Mammary epithelial cell (primary cell): ENCODE measurements at regions of chr3 and their contacts with region 1.

Region 1: DNA sequence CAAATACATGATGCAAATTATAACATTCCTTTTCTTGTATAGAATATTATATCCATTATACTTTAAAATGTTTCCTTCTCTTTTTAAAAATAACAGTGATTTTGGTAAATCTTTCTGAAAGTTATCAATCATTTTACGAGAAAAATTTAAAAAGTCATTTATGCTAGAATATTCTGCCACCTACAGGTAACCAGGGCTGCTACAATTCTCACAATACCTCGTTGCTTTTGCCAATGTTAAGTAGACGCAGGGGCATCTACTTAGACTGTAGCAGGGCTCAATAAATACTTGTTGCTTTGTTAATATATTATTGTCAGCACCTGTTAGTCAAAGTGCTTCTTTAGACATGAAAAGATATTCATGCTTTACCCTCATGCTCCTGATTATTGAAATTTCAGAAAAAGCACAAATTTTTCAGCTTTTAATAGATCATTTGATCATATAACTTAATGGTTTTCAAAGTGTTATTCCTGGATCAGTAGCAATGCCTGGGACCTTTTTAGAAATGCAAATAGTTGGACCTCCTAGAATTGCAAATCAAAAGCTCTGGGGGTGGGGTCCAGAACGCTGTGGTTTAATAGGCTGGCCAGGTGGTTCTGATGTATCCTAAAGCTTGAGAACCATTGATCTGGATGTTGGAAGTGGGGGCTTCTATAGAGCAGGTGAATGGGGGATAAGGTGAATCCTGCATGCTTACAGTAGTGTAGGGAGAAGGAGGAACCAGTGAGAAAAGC is 223.6 kb upstream of the PDZRN3 start:
- DNase-seq: peak; percentile 13
- H3K4me3 ChIP-seq: no peak overlapping the region
- H3K27ac ChIP-seq: no peak overlapping the region
- H3K4me1 ChIP-seq: no peaks in the 10 kb centered on the region
- H3K27me3 ChIP-seq: no peaks in the 10 kb centered on the region
- CTCF ChIP-seq: peak; percentile 77 to 82

Region 2: GRCh38 chr3:73459711-73460110 is 388.6 kb before region 1 on chr3:
- CTCF ChIA-PET with region 1: no interaction called
- dilution Hi-C with region 1: no loop called
- in situ Hi-C with region 1: no loop called
- intact Hi-C with region 1: loop called (anchors 5 kb)
- DNase-seq: no peak
- H3K4me3 ChIP-seq: no peak overlapping the region
- H3K27ac ChIP-seq: no peak overlapping the region
- H3K4me1 ChIP-seq: no peaks in the 10 kb centered on the region
- H3K27me3 ChIP-seq: no peaks in the 10 kb centered on the region
- CTCF ChIP-seq: no peak

Region 3: DNA sequence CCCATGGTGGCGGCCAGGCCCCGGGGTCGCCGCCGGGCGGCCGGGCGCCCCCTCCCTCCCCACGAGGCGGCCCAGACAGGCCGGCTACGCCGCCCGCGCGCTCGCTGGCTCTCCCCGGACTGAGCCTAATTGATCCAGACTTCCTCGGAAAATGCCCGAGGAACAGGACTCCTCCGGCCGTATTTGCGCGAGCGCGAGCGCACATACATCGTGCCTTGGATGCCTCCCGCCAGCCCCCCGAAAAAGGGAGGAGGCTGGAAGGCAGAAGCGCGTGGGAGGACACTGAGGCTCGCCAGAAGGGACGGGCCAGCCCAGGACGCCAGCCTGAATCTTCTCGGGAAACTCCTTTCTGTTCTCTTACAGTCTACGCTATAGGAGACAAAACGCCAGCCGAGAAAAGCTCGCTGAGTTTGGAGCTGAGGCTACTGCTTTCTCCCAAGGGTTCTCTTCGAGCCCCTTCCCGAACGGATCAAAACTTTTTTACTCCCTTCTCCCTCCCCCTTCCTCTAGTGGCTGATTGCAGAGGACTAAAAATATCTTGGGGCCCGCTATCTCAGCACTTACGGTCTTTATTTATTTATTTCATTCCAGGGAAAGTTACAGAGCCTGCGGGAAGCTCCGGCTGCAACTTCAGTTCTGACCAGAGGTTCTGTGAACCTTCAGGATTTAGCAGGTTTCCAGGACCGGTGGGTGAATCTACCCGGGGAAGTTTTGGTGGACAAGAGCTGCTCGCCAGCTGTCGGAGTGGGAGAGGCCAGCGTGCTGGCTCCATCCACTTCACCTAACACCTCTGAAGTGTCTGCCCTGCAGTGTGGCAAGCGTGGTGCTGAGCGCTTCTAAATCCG is 223.3 kb before region 1 on chr3 and contains the start of gene PDZRN3:
- CTCF ChIA-PET with region 1: no interaction called
- dilution Hi-C with region 1: no loop called
- in situ Hi-C with region 1: no loop called
- intact Hi-C with region 1: loop called (anchors 2 kb)
- DNase-seq: peak; percentile 51
- H3K4me3 ChIP-seq: peak within 1 kb of the TSS; percentile 56 to 79 (median 78)
- H3K27ac ChIP-seq: no peak within 1 kb of the TSS
- H3K4me1 ChIP-seq: peaks cover 23% of the 10 kb centered on the region
- H3K27me3 ChIP-seq: no peaks in the 10 kb centered on the region
- CTCF ChIP-seq: no peak
- total RNA-seq, gene PDZRN3: 3.9 to 14.3 TPM

Region 4: DNA sequence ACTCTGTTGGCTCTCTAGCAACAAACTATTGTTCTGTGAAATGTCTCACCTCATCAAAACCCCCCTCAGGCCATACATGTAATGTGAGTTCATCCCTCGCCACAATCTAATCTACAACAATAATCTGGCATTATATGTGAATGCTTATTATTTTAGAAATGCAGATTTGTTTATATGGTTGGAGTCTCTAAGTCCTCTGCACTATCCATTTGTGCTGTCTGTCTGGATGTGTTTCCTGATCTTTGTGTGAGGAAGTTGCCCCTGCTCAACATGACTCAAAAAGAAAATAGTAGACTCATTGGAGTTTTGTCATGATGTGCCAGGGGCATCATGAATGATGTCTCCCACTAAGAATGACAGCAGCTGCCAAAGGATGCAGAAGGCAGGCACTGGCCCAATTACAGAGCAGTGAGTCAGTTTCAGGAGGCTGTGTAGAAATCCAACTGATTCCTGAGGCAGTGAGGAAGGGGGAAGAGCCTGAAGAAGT is 62.0 kb before region 1 on chr3:
- CTCF ChIA-PET with region 1: no interaction called
- dilution Hi-C with region 1: no loop called
- in situ Hi-C with region 1: no loop called
- intact Hi-C with region 1: loop called (anchors 1 kb)
- DNase-seq: peak; percentile 97
- H3K4me3 ChIP-seq: no peak overlapping the region
- H3K27ac ChIP-seq: peak overlapping the region; percentile 78
- H3K4me1 ChIP-seq: peaks cover 25% of the 10 kb centered on the region
- H3K27me3 ChIP-seq: no peaks in the 10 kb centered on the region
- CTCF ChIP-seq: no peak